Heart right ventricle (tissue), 16 donors: ENCODE measurements at regions of chr7 and their contacts with region 1.

Region 1: GRCh38 chr7:93902777-93903423 is 3.5 kb upstream of the GNGT1 start:
- DNase-seq: peak in 1 of 2 donors; percentile 36
- ATAC-seq: peak in 7 of 8 donors; percentile 20 to 71 (median 66)
- H3K4me3 ChIP-seq: no peak overlapping the region
- H3K27ac ChIP-seq: no peak overlapping the region
- H3K4me1 ChIP-seq: peaks cover 0 to 8% (median 0%) of the 10 kb centered on the region in 9 donors
- H3K27me3 ChIP-seq: peaks cover 0 to 4% (median 0%) of the 10 kb centered on the region in 7 donors
- CTCF ChIP-seq: peak; percentile 65 to 91 (median 78)

Region 2: GRCh38 chr7:93828260-93828659 is 74.6 kb before region 1 on chr7:
- intact Hi-C with region 1: no loop called
- DNase-seq: no peak
- ATAC-seq: no peak
- H3K4me3 ChIP-seq: no peak overlapping the region
- H3K27ac ChIP-seq: no peak overlapping the region
- H3K4me1 ChIP-seq: no peaks in the 10 kb centered on the region
- H3K27me3 ChIP-seq: no peaks in the 10 kb centered on the region
- CTCF ChIP-seq: no peak

Region 3: DNA sequence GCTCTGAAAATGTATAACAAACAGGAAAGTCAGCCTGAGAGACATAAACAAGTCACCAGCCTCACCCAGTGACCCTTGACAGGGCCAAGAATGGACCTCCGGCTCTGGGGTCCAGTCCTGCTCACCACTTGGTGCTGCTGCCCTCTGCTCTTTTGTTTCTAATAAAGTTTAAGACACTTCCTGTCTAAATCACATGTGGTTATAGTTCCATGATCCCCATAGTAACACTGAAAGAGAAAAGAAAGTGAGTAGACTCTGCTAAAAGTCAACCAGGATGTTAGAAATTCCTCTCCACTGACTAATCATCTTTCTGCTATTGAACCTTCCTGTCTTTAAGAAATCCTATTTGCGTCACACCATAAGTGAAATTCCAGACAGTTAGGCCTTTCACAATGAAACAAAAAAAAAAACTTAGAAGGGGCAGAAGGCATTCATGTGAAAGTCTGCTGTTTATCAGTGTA is 280.4 kb after region 1 on chr7:
- intact Hi-C with region 1: loop called in 2 of 10 experiments (anchors 5 to 10 kb)
- DNase-seq: peak in 1 of 2 donors; percentile 17
- ATAC-seq: peak; percentile 75 to 98 (median 94)
- H3K4me3 ChIP-seq: no peak overlapping the region
- H3K27ac ChIP-seq: peak overlapping the region; percentile 29 to 87 (median 78)
- H3K4me1 ChIP-seq: peaks cover 0 to 20% (median 15%) of the 10 kb centered on the region in 9 donors
- H3K27me3 ChIP-seq: no peaks in the 10 kb centered on the region
- CTCF ChIP-seq: peak in 2 of 9 donors; percentile 19 to 23

Region 4: GRCh38 chr7:94276795-94277194 is 373.9 kb after region 1 on chr7:
- intact Hi-C with region 1: loop called in 1 of 10 experiments (anchors 10 kb)
- DNase-seq: no peak
- ATAC-seq: peak in 6 of 8 donors; percentile 52 to 85 (median 71)
- H3K4me3 ChIP-seq: no peak overlapping the region
- H3K27ac ChIP-seq: no peak overlapping the region
- H3K4me1 ChIP-seq: peaks cover 0 to 20% (median 0%) of the 10 kb centered on the region in 9 donors
- H3K27me3 ChIP-seq: no peaks in the 10 kb centered on the region
- CTCF ChIP-seq: peak in 7 of 9 donors; percentile 34 to 60 (median 46)